ENCODE measurements at regions of chr11 and their contacts with region 1.

Region 1: DNA sequence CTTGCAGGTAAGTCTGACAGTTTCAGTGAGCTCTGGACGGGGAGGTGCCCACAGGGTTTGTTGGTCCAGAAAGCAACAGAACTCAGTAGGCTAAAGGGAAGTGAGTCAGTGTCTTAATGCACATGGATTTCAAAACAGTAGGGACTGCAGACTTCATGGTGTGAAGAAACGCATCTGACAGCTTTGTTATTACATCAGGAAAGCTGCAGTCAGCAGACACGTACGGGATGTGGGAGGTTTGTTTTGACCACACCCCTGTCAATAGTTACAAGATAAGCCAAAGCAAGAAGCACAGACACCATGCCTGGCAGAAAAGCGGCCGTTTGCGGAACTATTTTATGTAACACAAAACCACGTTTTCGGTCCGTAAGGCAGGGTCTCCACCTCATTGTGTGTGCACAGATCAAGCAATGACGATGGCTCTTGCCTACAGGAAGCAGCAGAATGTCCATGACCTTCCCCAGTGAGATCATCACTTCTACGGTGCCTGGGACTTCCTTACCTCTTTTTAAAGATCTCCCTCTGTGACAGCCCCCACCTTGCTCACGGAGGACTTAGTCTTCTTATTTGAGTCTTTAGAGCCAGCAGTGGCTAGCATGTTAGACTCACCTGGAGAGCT is 58.2 kb upstream of the FTH1 start:
- DNase-seq: peak; percentile 73 to 100
- H3K4me3 ChIP-seq: peak overlapping the region; percentile 22; the same call in 1 of the 2 replicates
- H3K27ac ChIP-seq: peak overlapping the region; percentile 89
- H3K4me1 ChIP-seq: peaks cover 36% of the 10 kb centered on the region
- H3K27me3 ChIP-seq: no peaks in the 10 kb centered on the region
- CTCF ChIP-seq: no peak

Region 2: GRCh38 chr11:62013591-62014476 is 11.8 kb before region 1 on chr11:
- CTCF ChIA-PET with region 1: no interaction called
- POLR2A ChIA-PET with region 1: interaction called, 6 read pairs
- intact Hi-C with region 1: loop called (anchors 1 kb)
- DNase-seq: peak; percentile 80 to 83
- H3K4me3 ChIP-seq: peak overlapping the region; percentile 33; the same call in 1 of the 2 replicates
- H3K27ac ChIP-seq: peak overlapping the region; percentile 72
- H3K4me1 ChIP-seq: peaks cover 46% of the 10 kb centered on the region
- H3K27me3 ChIP-seq: no peaks in the 10 kb centered on the region
- CTCF ChIP-seq: no peak

Measured in PC-9 (cell line).